GM13976 (cell line): ENCODE measurements at regions of chr11 and their contacts with region 1.

Region 1: GRCh38 chr11:19742588-19743292 is 30.1 kb downstream of the NAV2 start:
- DNase-seq: peak; percentile 47
- CTCF ChIP-seq: peak; percentile 69

Region 2: GRCh38 chr11:19071255-19071654 is 671.5 kb before region 1 on chr11:
- in situ Hi-C with region 1: loop called (anchors 25 kb)
- DNase-seq: peak; percentile 79
- CTCF ChIP-seq: peak; percentile 95

Region 3: GRCh38 chr11:19566583-19567379 is 176.0 kb before region 1 on chr11:
- in situ Hi-C with region 1: loop called (anchors 5 kb)
- DNase-seq: no peak
- CTCF ChIP-seq: no peak